ENCODE measurements at regions of chr17 and their contacts with region 1.

Region 1: DNA sequence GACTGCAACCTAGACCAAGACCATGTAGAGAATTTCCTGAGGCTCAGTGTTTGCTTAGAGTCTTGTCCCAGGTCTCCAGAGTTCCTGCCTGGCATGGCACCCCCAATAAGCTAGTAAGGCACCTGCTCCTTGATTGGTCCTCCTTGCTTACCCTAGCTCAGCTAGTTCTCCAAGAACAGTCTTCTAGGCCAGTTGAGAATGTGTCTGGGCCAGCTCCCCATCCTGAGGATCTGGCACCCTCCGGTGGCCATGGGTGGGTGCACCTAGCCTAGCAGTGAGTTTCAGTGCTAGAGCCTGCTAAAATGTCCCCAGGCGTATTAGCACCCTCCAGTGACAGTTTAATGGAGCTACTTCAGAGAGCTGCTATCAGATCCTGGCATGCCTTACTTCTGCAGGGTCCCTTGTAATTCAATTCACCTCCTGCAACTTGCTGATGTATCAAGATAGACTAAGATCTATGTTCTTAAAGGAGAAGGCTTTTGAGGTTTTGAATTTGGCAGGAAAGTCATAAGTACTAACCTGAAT is 44.4 kb upstream of the MED13 start:
- DNase-seq: peak; percentile 90
- ATAC-seq: peak; percentile 99
- H3K4me3 ChIP-seq: no peak overlapping the region
- H3K27ac ChIP-seq: no peak overlapping the region
- H3K4me1 ChIP-seq: peaks cover 36% of the 10 kb centered on the region
- H3K27me3 ChIP-seq: no peaks in the 10 kb centered on the region; a peak in 2 of 5 replicates
- CTCF ChIP-seq: peak; percentile 100
- EP300 ChIP-seq: peak in 1 of 2 experiments; percentile 33; a peak in 1 of 4 replicates
- POLR2A ChIP-seq: no peak
- RAD21 ChIP-seq: peak; percentile 100

Region 2: GRCh38 chr17:61635913-61636432 is 473.5 kb before region 1 on chr17:
- CTCF ChIA-PET with region 1: interaction called, 8 read pairs
- POLR2A ChIA-PET with region 1: no interaction called
- in situ Hi-C with region 1: loop called (anchors 10 kb)
- intact Hi-C with region 1: loop called (anchors 1 kb)
- DNase-seq: peak; percentile 62
- ATAC-seq: peak; percentile 58
- H3K4me3 ChIP-seq: no peak overlapping the region
- H3K27ac ChIP-seq: no peak overlapping the region
- H3K4me1 ChIP-seq: no peaks in the 10 kb centered on the region
- H3K27me3 ChIP-seq: no peaks in the 10 kb centered on the region
- CTCF ChIP-seq: peak; percentile 91
- EP300 ChIP-seq: no peak
- POLR2A ChIP-seq: no peak
- RAD21 ChIP-seq: peak; percentile 83

Region 3: GRCh38 chr17:61997664-61998063 is 111.8 kb before region 1 on chr17:
- CTCF ChIA-PET with region 1: no interaction called
- POLR2A ChIA-PET with region 1: no interaction called
- in situ Hi-C with region 1: no loop called
- intact Hi-C with region 1: loop called (anchors 5 kb)
- DNase-seq: no peak
- ATAC-seq: no peak
- H3K4me3 ChIP-seq: no peak overlapping the region
- H3K27ac ChIP-seq: no peak overlapping the region
- H3K4me1 ChIP-seq: no peaks in the 10 kb centered on the region
- H3K27me3 ChIP-seq: no peaks in the 10 kb centered on the region; a peak in 1 of 5 replicates
- CTCF ChIP-seq: no peak
- EP300 ChIP-seq: no peak
- POLR2A ChIP-seq: no peak
- RAD21 ChIP-seq: no peak

Region 4: GRCh38 chr17:62085511-62086408 is 23.7 kb before region 1 on chr17:
- CTCF ChIA-PET with region 1: no interaction called
- POLR2A ChIA-PET with region 1: interaction called, 11 read pairs
- in situ Hi-C with region 1: no loop called
- intact Hi-C with region 1: loop called (anchors 1 kb)
- DNase-seq: peak; percentile 79
- ATAC-seq: peak; percentile 78
- H3K4me3 ChIP-seq: no peak overlapping the region; a peak in 1 of 6 replicates
- H3K27ac ChIP-seq: peak overlapping the region; percentile 48
- H3K4me1 ChIP-seq: peaks cover 63% of the 10 kb centered on the region
- H3K27me3 ChIP-seq: no peaks in the 10 kb centered on the region
- CTCF ChIP-seq: peak; percentile 7; the same call in 1 of the 2 replicates
- EP300 ChIP-seq: peak in 1 of 2 experiments; percentile 68; a peak in 2 of 4 replicates
- POLR2A ChIP-seq: no peak
- RAD21 ChIP-seq: peak; percentile 27; the same call in 1 of the 2 replicates

Region 5: GRCh38 chr17:62092784-62093183 is 16.7 kb before region 1 on chr17:
- CTCF ChIA-PET with region 1: no interaction called
- POLR2A ChIA-PET with region 1: interaction called, 10 read pairs
- in situ Hi-C with region 1: no loop called
- intact Hi-C with region 1: loop called (anchors 1 kb)
- DNase-seq: no peak
- ATAC-seq: no peak
- H3K4me3 ChIP-seq: no peak overlapping the region
- H3K27ac ChIP-seq: no peak overlapping the region
- H3K4me1 ChIP-seq: peaks cover 66% of the 10 kb centered on the region
- H3K27me3 ChIP-seq: no peaks in the 10 kb centered on the region
- CTCF ChIP-seq: no peak
- EP300 ChIP-seq: no peak
- POLR2A ChIP-seq: no peak
- RAD21 ChIP-seq: no peak

Region 6: DNA sequence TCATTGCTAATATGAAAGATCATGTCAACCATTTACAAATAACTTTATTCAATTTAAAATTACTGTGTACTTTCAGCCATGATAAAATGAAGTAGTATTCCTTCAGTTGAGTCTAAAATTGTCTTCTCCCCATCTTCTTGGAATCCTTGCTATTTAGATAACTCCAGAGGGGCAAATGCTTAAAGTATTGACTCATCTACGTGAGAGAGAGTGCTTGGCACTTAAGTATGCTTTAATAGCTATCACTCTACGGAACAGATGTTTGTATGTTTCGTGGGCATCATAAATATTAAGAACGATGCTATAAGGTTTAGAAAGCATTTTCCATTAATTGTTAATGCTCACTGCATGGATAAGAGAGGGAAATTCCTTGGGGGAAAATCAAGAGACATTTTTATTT is 25.0 kb after region 1 on chr17:
- CTCF ChIA-PET with region 1: no interaction called
- POLR2A ChIA-PET with region 1: no interaction called
- in situ Hi-C with region 1: no loop called
- intact Hi-C with region 1: no loop called
- DNase-seq: no peak
- ATAC-seq: no peak
- H3K4me3 ChIP-seq: no peak overlapping the region
- H3K27ac ChIP-seq: no peak overlapping the region
- H3K4me1 ChIP-seq: no peaks in the 10 kb centered on the region
- H3K27me3 ChIP-seq: no peaks in the 10 kb centered on the region
- CTCF ChIP-seq: no peak
- EP300 ChIP-seq: no peak
- POLR2A ChIP-seq: no peak
- RAD21 ChIP-seq: no peak